ENCODE measurements at regions of chr12 and their contacts with region 1.

Region 1: GRCh38 chr12:98490501-98491453 is 24.6 kb upstream of the TMPO start:
- DNase-seq: peak; percentile 92 to 93
- H3K4me3 ChIP-seq: no peak overlapping the region
- H3K4me3 Mint-ChIP-seq: peak overlapping the region; percentile 54
- H3K27ac Mint-ChIP-seq: peak overlapping the region; percentile 90
- H3K4me1 ChIP-seq: peaks cover 36% of the 10 kb centered on the region
- H3K4me1 Mint-ChIP-seq: peaks cover 23% of the 10 kb centered on the region
- H3K27me3 ChIP-seq: no peaks in the 10 kb centered on the region
- H3K27me3 Mint-ChIP-seq: no peaks in the 10 kb centered on the region
- CTCF ChIP-seq: peak; percentile 78 to 79

Region 2: DNA sequence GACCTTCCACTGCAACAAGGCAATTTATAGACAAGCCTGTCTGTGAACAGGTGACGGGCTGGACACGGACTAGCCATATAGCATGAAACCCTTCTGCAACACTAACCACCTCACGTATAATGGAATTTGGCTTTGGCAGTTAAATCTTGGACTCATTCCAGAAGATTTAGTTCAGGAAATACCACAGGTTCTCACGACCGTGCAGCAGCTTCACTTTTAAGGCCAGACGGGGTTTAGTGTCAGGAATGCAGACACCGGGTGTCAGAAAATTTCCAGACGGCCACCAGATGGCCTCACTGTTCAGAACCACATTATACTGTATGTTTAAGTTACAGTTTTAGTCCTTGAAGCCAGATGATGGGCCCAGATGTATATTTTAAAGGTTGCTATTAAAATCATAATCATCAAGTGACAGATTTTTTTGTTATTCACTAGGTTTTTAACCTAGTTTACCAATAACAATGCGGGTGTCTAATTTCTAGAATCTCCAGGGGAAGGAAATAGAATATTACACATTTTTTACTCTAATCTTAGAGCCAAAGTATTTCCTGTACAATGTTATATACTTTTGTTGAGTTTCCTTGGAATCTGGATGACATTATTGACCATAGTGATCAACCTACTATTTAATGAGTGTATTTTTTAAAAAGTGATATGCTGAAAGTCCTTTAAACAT is 65.9 kb before region 1 on chr12:
- CTCF ChIA-PET with region 1: interaction called, 4 read pairs
- POLR2A ChIA-PET with region 1: no interaction called
- intact Hi-C with region 1: loop called (anchors 1 kb)
- DNase-seq: peak; percentile 69 to 75
- H3K4me3 ChIP-seq: no peak overlapping the region
- H3K4me3 Mint-ChIP-seq: no peak overlapping the region
- H3K27ac Mint-ChIP-seq: no peak overlapping the region
- H3K4me1 ChIP-seq: peaks cover 6% of the 10 kb centered on the region; the same call in 1 of the 2 replicates
- H3K4me1 Mint-ChIP-seq: peaks cover 2% of the 10 kb centered on the region
- H3K27me3 ChIP-seq: no peaks in the 10 kb centered on the region
- H3K27me3 Mint-ChIP-seq: no peaks in the 10 kb centered on the region
- CTCF ChIP-seq: peak; percentile 75

Region 3: DNA sequence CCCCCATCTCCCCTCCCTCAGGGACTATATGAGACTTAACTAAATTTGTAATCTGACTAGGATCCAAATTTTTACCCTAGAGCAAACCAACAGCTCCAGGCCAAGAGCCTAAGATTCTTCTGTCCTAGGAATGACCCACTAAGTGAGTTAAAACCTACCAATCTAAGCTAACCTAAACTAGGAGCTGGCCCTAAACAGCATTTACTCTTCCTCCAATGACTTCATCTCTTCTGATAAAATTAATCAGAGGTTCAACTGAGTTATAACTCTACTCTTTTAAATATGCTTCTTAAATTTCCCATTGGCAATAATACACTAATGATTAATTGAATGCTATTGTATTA is 15.2 kb before region 1 on chr12:
- CTCF ChIA-PET with region 1: interaction called, 4 read pairs
- POLR2A ChIA-PET with region 1: no interaction called
- intact Hi-C with region 1: loop called (anchors 2 kb)
- DNase-seq: no peak
- H3K4me3 ChIP-seq: no peak overlapping the region
- H3K4me3 Mint-ChIP-seq: peak overlapping the region; percentile 39
- H3K27ac Mint-ChIP-seq: peak overlapping the region; percentile 93
- H3K4me1 ChIP-seq: peaks cover 6% of the 10 kb centered on the region; the same call in 1 of the 2 replicates
- H3K4me1 Mint-ChIP-seq: peaks cover 10% of the 10 kb centered on the region
- H3K27me3 ChIP-seq: no peaks in the 10 kb centered on the region
- H3K27me3 Mint-ChIP-seq: no peaks in the 10 kb centered on the region
- CTCF ChIP-seq: no peak

Region 4: DNA sequence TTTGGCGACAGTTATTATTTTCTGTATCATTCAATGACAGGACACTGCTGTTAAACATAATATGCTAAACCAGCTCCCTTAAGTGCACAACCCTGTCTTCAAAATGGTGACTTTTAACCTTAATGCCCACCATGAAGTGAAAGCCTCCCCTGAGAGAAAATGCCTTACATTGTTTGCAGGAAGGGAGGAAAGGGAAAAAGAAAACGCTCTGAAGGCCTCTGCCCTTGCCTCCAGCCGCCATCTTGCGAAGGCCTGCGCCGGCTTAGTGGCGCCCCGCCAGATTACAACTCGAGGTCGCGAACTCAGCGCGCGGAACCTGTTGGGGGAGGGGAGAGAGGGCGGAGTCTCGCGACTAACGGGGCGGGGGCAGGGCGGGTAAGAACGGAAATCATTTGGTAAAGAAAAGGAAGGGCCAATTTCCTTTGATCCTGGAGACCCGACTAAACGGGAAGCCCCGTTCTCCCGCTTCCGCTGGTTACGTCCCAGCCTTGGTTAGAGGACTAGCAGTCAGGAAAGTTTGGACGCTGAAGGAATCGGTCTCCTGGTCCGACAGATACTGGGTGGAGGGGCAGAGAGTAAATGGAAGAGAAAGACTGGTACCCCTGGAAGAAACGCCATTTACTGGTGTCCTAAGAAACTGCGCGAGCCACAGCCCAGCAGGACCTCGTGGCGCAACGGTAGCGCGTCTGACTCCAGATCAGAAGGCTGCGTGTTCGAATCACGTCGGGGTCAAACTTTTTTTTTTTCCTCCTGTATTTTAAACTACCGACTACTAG is 13.0 kb after region 1 on chr12:
- CTCF ChIA-PET with region 1: interaction called, 26 read pairs
- POLR2A ChIA-PET with region 1: interaction called, 5 read pairs
- intact Hi-C with region 1: loop called (anchors 1 kb)
- DNase-seq: peak; percentile 93 to 94
- H3K4me3 ChIP-seq: peak overlapping the region; percentile 71
- H3K4me3 Mint-ChIP-seq: peak overlapping the region; percentile 81
- H3K27ac Mint-ChIP-seq: peak overlapping the region; percentile 99
- H3K4me1 ChIP-seq: peaks cover 23% of the 10 kb centered on the region
- H3K4me1 Mint-ChIP-seq: peaks cover 31% of the 10 kb centered on the region
- H3K27me3 ChIP-seq: no peaks in the 10 kb centered on the region
- H3K27me3 Mint-ChIP-seq: peaks cover 10% of the 10 kb centered on the region
- CTCF ChIP-seq: no peak

Region 5: GRCh38 chr12:98516184-98516873 is 25.6 kb after region 1 on chr12:
- CTCF ChIA-PET with region 1: interaction called, 16 read pairs
- POLR2A ChIA-PET with region 1: interaction called, 6 read pairs
- intact Hi-C with region 1: loop called (anchors 1 kb)
- DNase-seq: peak; percentile 86 to 88
- H3K4me3 ChIP-seq: peak overlapping the region; percentile 99
- H3K4me3 Mint-ChIP-seq: peak overlapping the region; percentile 72
- H3K27ac Mint-ChIP-seq: peak overlapping the region; percentile 98
- H3K4me1 ChIP-seq: peaks cover 20% of the 10 kb centered on the region
- H3K4me1 Mint-ChIP-seq: peaks cover 15% of the 10 kb centered on the region
- H3K27me3 ChIP-seq: no peaks in the 10 kb centered on the region
- H3K27me3 Mint-ChIP-seq: no peaks in the 10 kb centered on the region
- CTCF ChIP-seq: peak; percentile 55 to 61

Region 6: GRCh38 chr12:98532681-98533304 is 42.0 kb after region 1 on chr12:
- CTCF ChIA-PET with region 1: interaction called, 4 read pairs
- POLR2A ChIA-PET with region 1: interaction called, 3 read pairs
- intact Hi-C with region 1: loop called (anchors 1 kb)
- DNase-seq: peak in 1 of 2 experiments; percentile 77
- H3K4me3 ChIP-seq: no peak overlapping the region
- H3K4me3 Mint-ChIP-seq: no peak overlapping the region
- H3K27ac Mint-ChIP-seq: peak overlapping the region; percentile 69
- H3K4me1 ChIP-seq: peaks cover 19% of the 10 kb centered on the region
- H3K4me1 Mint-ChIP-seq: peaks cover 4% of the 10 kb centered on the region
- H3K27me3 ChIP-seq: no peaks in the 10 kb centered on the region
- H3K27me3 Mint-ChIP-seq: no peaks in the 10 kb centered on the region
- CTCF ChIP-seq: peak; percentile 62 to 75